ENCODE measurements at regions of chr7 and their contacts with region 1.

Region 1: GRCh38 chr7:129218514-129219062 is 6.2 kb upstream of the AHCYL2 start:
- DNase-seq: peak; percentile 65 to 88 (median 72)
- ATAC-seq: peak; percentile 84
- H3K4me3 ChIP-seq: no peak overlapping the region
- H3K4me3 Mint-ChIP-seq: no peak overlapping the region
- H3K27ac ChIP-seq: no peak overlapping the region
- H3K27ac Mint-ChIP-seq: no peak overlapping the region
- H3K4me1 ChIP-seq: peaks cover 20% of the 10 kb centered on the region
- H3K4me1 Mint-ChIP-seq: peaks cover 16% of the 10 kb centered on the region
- H3K27me3 ChIP-seq: no peaks in the 10 kb centered on the region
- H3K27me3 Mint-ChIP-seq: no peaks in the 10 kb centered on the region
- CTCF ChIP-seq: peak; percentile 88

Region 2: GRCh38 chr7:129271500-129272355 is 53.1 kb after region 1 on chr7:
- CTCF ChIA-PET with region 1: interaction called, 92 read pairs
- POLR2A ChIA-PET with region 1: interaction called, 14 read pairs
- intact Hi-C with region 1: loop called (anchors 1 kb)
- DNase-seq: peak; percentile 31 to 88 (median 50)
- ATAC-seq: peak; percentile 100
- H3K4me3 ChIP-seq: no peak overlapping the region
- H3K4me3 Mint-ChIP-seq: no peak overlapping the region
- H3K27ac ChIP-seq: no peak overlapping the region
- H3K27ac Mint-ChIP-seq: no peak overlapping the region
- H3K4me1 ChIP-seq: peaks cover 2% of the 10 kb centered on the region
- H3K4me1 Mint-ChIP-seq: peaks cover 6% of the 10 kb centered on the region
- H3K27me3 ChIP-seq: no peaks in the 10 kb centered on the region
- H3K27me3 Mint-ChIP-seq: no peaks in the 10 kb centered on the region
- CTCF ChIP-seq: peak; percentile 83

Region 3: GRCh38 chr7:129298268-129298893 is 79.8 kb after region 1 on chr7:
- CTCF ChIA-PET with region 1: interaction called, 33 read pairs
- POLR2A ChIA-PET with region 1: interaction called, 3 read pairs
- intact Hi-C with region 1: loop called (anchors 1 kb)
- DNase-seq: peak; percentile 24 to 68 (median 40)
- ATAC-seq: no peak
- H3K4me3 ChIP-seq: no peak overlapping the region
- H3K4me3 Mint-ChIP-seq: no peak overlapping the region
- H3K27ac ChIP-seq: no peak overlapping the region
- H3K27ac Mint-ChIP-seq: no peak overlapping the region
- H3K4me1 ChIP-seq: no peaks in the 10 kb centered on the region
- H3K4me1 Mint-ChIP-seq: peaks cover 8% of the 10 kb centered on the region
- H3K27me3 ChIP-seq: no peaks in the 10 kb centered on the region
- H3K27me3 Mint-ChIP-seq: no peaks in the 10 kb centered on the region
- CTCF ChIP-seq: peak; percentile 79

Region 4: DNA sequence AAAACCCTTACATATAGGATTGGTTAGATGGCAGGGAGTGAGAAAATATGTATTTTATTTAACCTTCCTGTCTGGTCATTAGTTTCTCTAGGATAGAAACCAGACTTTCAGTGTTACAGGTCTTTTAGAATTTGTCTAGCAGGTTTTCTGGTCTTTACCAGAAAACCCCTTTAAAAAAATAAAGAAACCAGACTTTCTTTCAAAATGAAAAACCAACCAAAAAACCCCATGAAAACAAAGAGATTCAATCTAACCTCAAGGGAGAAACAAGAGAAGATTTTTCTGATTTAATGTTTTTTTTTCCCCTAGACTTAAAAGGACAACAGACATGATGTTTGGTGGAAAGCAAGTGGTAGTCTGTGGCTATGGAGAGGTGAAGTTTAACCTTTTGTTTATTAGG is 186.9 kb after region 1 on chr7:
- CTCF ChIA-PET with region 1: no interaction called
- POLR2A ChIA-PET with region 1: no interaction called
- intact Hi-C with region 1: no loop called
- DNase-seq: no peak
- ATAC-seq: no peak
- H3K4me3 ChIP-seq: no peak overlapping the region
- H3K4me3 Mint-ChIP-seq: no peak overlapping the region
- H3K27ac ChIP-seq: no peak overlapping the region
- H3K27ac Mint-ChIP-seq: no peak overlapping the region
- H3K4me1 ChIP-seq: no peaks in the 10 kb centered on the region
- H3K4me1 Mint-ChIP-seq: no peaks in the 10 kb centered on the region
- H3K27me3 ChIP-seq: no peaks in the 10 kb centered on the region
- H3K27me3 Mint-ChIP-seq: no peaks in the 10 kb centered on the region
- CTCF ChIP-seq: no peak

Measured in CD4-positive, alpha-beta T cell (primary cell).